Endothelial cell of umbilical vein (primary cell): ENCODE measurements at regions of chr11 and their contacts with region 1.

Region 1: GRCh38 chr11:3807909-3808860 is at the start of gene PGAP2:
- DNase-seq: peak; percentile 57
- H3K4me3 ChIP-seq: peak within 1 kb of the TSS; percentile 62 to 93 (median 91)
- H3K27ac ChIP-seq: peak within 1 kb of the TSS; percentile 37
- H3K4me1 ChIP-seq: peaks cover 11% of the 10 kb centered on the region
- H3K27me3 ChIP-seq: no peaks in the 10 kb centered on the region
- CTCF ChIP-seq: peak; percentile 53 to 83
- POLR2A ChIP-seq: no peak
- total RNA-seq, gene PGAP2: 18.3 and 18.5 TPM in 2 replicates

Region 2: GRCh38 chr11:3781423-3781822 is 26.8 kb before region 1 on chr11:
- CTCF ChIA-PET with region 1: interaction called, 18 read pairs
- POLR2A ChIA-PET with region 1: no interaction called
- dilution Hi-C with region 1: no loop called
- intact Hi-C with region 1: loop called (anchors 2 kb)
- DNase-seq: no peak
- H3K4me3 ChIP-seq: no peak overlapping the region
- H3K27ac ChIP-seq: no peak overlapping the region
- H3K4me1 ChIP-seq: peaks cover under 1% of the 10 kb centered on the region
- H3K27me3 ChIP-seq: no peaks in the 10 kb centered on the region
- CTCF ChIP-seq: no peak
- POLR2A ChIP-seq: no peak

Region 3: DNA sequence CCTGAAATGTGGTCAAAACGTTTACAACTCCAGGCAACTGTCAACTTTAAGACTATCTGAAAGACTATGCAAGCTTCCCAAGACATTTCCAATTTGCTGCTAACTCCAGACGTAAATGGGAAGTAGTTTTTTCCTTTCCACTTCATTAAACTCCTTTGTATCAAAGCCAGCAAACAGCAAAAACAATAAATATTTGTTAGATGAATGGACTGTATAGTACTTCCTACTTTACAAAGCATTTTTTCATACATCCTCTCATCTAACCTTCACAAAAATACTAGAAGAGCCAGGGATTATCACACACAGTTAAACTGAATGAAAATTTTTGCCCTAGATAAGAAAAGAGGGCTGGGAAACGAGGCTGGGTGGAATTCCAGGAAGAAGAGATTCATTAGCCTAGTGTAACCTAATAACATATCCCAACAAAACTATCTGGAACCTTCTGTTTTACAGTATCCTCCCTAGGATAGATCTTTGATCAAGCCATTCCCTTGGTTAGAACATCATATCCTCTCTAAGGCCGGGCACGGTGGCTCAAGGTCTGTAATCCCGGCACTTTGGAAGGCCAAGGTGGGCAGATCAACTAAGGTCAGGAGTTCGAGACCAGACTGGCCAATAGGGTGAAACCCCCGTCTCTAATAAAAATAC is 21.3 kb before region 1 on chr11:
- CTCF ChIA-PET with region 1: interaction called, 18 read pairs
- POLR2A ChIA-PET with region 1: no interaction called
- dilution Hi-C with region 1: no loop called
- intact Hi-C with region 1: loop called (anchors 2 kb)
- DNase-seq: peak; percentile 65
- H3K4me3 ChIP-seq: peak overlapping the region in 1 of 3 experiments; percentile 27
- H3K27ac ChIP-seq: peak overlapping the region; percentile 47
- H3K4me1 ChIP-seq: peaks cover 15% of the 10 kb centered on the region
- H3K27me3 ChIP-seq: no peaks in the 10 kb centered on the region
- CTCF ChIP-seq: no peak
- POLR2A ChIP-seq: no peak

Region 4: GRCh38 chr11:3797329-3798095 is 10.7 kb before region 1 on chr11 and contains the start of gene NUP98:
- CTCF ChIA-PET with region 1: interaction called, 19 read pairs
- POLR2A ChIA-PET with region 1: interaction called, 7 read pairs
- dilution Hi-C with region 1: no loop called
- intact Hi-C with region 1: loop called (anchors 1 kb)
- DNase-seq: peak; percentile 100
- H3K4me3 ChIP-seq: peak within 1 kb of the TSS; percentile 72 to 99 (median 90)
- H3K27ac ChIP-seq: peak within 1 kb of the TSS; percentile 76
- H3K4me1 ChIP-seq: peaks cover 15% of the 10 kb centered on the region
- H3K27me3 ChIP-seq: no peaks in the 10 kb centered on the region
- CTCF ChIP-seq: peak in 1 of 2 donors; percentile 2
- POLR2A ChIP-seq: peak; percentile 90
- total RNA-seq, gene NUP98: 80.8 and 92.7 TPM in 2 replicates

Region 5: GRCh38 chr11:3824714-3825472 is 16.7 kb after region 1 on chr11:
- CTCF ChIA-PET with region 1: interaction called, 30 read pairs
- POLR2A ChIA-PET with region 1: no interaction called
- dilution Hi-C with region 1: no loop called
- intact Hi-C with region 1: no loop called
- DNase-seq: peak; percentile 44
- H3K4me3 ChIP-seq: no peak overlapping the region
- H3K27ac ChIP-seq: no peak overlapping the region
- H3K4me1 ChIP-seq: no peaks in the 10 kb centered on the region
- H3K27me3 ChIP-seq: no peaks in the 10 kb centered on the region
- CTCF ChIP-seq: peak; percentile 74
- POLR2A ChIP-seq: no peak

Region 6: GRCh38 chr11:3971756-3972404 is 163.7 kb after region 1 on chr11:
- CTCF ChIA-PET with region 1: no interaction called
- POLR2A ChIA-PET with region 1: no interaction called
- dilution Hi-C with region 1: no loop called
- intact Hi-C with region 1: no loop called
- DNase-seq: no peak
- H3K4me3 ChIP-seq: no peak overlapping the region
- H3K27ac ChIP-seq: no peak overlapping the region
- H3K4me1 ChIP-seq: no peaks in the 10 kb centered on the region
- H3K27me3 ChIP-seq: no peaks in the 10 kb centered on the region
- CTCF ChIP-seq: no peak
- POLR2A ChIP-seq: no peak

Region 7: GRCh38 chr11:4125141-4125540 is 317.0 kb after region 1 on chr11:
- CTCF ChIA-PET with region 1: no interaction called
- POLR2A ChIA-PET with region 1: no interaction called
- dilution Hi-C with region 1: no loop called
- intact Hi-C with region 1: no loop called
- DNase-seq: no peak
- H3K4me3 ChIP-seq: no peak overlapping the region
- H3K27ac ChIP-seq: no peak overlapping the region
- H3K4me1 ChIP-seq: no peaks in the 10 kb centered on the region
- H3K27me3 ChIP-seq: no peaks in the 10 kb centered on the region
- CTCF ChIP-seq: no peak
- POLR2A ChIP-seq: no peak